ENCODE measurements at regions of chr11 and their contacts with region 1.

Region 1: GRCh38 chr11:62315431-62315830 is 16.6 kb upstream of the SCGB1D4 start:
- DNase-seq: no peak
- ATAC-seq: no peak
- H3K4me3 Mint-ChIP-seq: no peak overlapping the region
- H3K27ac Mint-ChIP-seq: no peak overlapping the region
- H3K4me1 Mint-ChIP-seq: peaks cover 10% of the 10 kb centered on the region
- H3K27me3 Mint-ChIP-seq: peaks cover 17% of the 10 kb centered on the region

Region 2: DNA sequence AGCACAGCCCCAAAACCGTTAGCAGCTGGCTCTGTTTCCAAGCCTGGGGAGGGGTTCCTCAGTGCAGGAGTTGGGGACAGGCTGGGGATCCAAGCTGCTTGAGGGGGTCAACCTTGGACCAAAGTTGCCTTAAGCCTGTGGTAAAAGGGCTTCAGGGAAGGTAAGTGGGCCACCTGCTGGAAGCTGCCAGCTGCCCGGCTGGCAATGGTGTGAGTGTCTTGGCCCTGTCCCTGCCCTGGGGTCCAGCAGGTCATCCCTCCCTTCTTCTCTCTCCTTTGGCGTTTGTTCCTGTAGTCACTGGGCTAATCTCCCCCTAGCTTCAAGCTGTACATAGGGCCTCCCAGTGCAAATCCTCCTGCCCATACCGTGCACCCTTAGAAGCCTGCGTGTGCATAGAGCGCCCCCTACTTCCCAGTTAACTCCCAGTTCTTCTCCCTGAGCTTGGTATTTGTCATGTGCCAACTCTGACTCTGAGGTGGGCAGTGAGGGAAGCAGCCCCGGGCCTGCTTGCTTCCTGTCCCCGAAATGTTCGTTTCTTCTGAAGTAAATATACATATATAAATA is 527.4 kb before region 1 on chr11:
- CTCF ChIA-PET with region 1: no interaction called
- POLR2A ChIA-PET with region 1: no interaction called
- intact Hi-C with region 1: no loop called
- DNase-seq: peak; percentile 39
- ATAC-seq: no peak
- H3K4me3 Mint-ChIP-seq: no peak overlapping the region
- H3K27ac Mint-ChIP-seq: no peak overlapping the region
- H3K4me1 Mint-ChIP-seq: peaks cover 16% of the 10 kb centered on the region
- H3K27me3 Mint-ChIP-seq: no peaks in the 10 kb centered on the region

Region 3: DNA sequence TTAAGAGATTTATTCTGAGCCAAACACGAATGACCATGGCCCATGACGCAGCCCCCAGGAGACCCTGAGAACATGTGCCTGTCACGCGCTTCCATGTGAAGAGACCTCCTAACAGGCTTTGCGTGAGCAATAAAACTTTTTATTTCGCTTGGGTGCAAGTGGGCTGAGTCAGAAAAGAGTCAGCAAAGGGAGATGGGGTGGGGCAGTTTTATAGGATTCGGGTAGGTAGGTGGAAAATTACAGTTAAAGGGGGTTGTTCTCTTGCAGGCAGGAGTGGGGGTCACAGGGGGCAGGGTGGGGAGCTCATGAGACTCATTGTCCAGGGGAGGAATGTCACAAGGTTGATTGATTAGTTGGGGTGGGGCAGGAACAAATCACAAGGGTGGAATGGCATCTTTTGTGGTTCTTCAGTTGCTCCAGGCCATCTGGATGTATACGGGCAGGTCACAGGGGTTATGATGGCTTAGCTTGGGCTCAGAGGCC is 270.8 kb before region 1 on chr11:
- CTCF ChIA-PET with region 1: no interaction called
- POLR2A ChIA-PET with region 1: no interaction called
- intact Hi-C with region 1: no loop called
- DNase-seq: no peak
- ATAC-seq: no peak
- H3K4me3 Mint-ChIP-seq: no peak overlapping the region
- H3K27ac Mint-ChIP-seq: no peak overlapping the region
- H3K4me1 Mint-ChIP-seq: peaks cover 2% of the 10 kb centered on the region
- H3K27me3 Mint-ChIP-seq: peaks cover 4% of the 10 kb centered on the region

Region 4: DNA sequence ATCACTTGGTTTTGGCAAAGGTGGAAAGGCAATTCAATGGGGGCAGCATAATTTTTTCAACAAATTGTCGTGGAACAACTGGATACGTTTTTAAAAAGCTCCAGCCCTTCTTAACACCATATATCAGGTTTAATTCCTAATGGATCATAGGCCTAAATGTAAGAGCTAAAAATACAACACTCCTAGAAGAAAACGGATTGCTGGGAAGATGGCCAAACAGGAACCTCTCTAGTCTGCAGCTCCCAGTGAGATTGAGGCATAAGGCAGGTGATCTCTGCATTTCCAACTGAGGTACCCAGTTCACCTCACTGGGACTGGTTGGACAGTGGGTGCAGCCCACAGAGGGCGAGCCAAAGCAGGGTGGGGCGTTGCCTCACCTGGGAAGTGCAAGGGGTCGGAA is 157.8 kb before region 1 on chr11:
- CTCF ChIA-PET with region 1: no interaction called
- POLR2A ChIA-PET with region 1: no interaction called
- intact Hi-C with region 1: no loop called
- DNase-seq: no peak
- ATAC-seq: no peak
- H3K4me3 Mint-ChIP-seq: no peak overlapping the region
- H3K27ac Mint-ChIP-seq: no peak overlapping the region
- H3K4me1 Mint-ChIP-seq: no peaks in the 10 kb centered on the region
- H3K27me3 Mint-ChIP-seq: peaks cover 19% of the 10 kb centered on the region

Region 5: DNA sequence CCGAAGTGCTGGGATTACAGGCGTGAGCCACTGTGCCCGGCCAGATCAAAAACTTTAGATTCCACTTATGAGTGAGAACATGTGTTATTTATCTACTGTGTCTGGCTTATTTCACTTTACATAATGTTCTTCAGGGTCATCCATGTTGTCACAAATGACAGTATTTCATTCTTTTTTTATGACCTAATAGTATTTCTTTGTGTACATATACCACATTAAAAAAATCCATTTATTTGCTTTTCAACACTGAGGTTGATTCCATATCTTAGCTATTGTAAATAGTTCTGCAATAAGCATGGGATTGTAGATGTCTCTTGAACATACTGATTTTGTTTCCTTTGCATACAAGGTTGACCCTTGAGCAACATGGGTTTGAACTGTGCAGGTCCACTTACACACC is 138.7 kb before region 1 on chr11:
- CTCF ChIA-PET with region 1: interaction called, 20 read pairs
- POLR2A ChIA-PET with region 1: no interaction called
- intact Hi-C with region 1: loop called (anchors 1 kb)
- DNase-seq: no peak
- ATAC-seq: no peak
- H3K4me3 Mint-ChIP-seq: no peak overlapping the region
- H3K27ac Mint-ChIP-seq: no peak overlapping the region
- H3K4me1 Mint-ChIP-seq: no peaks in the 10 kb centered on the region
- H3K27me3 Mint-ChIP-seq: peaks cover 20% of the 10 kb centered on the region

Region 6: GRCh38 chr11:62217191-62217748 is 98.2 kb before region 1 on chr11:
- CTCF ChIA-PET with region 1: interaction called, 8 read pairs
- POLR2A ChIA-PET with region 1: no interaction called
- intact Hi-C with region 1: loop called (anchors 1 kb)
- DNase-seq: peak; percentile 8
- ATAC-seq: no peak
- H3K4me3 Mint-ChIP-seq: no peak overlapping the region
- H3K27ac Mint-ChIP-seq: no peak overlapping the region
- H3K4me1 Mint-ChIP-seq: no peaks in the 10 kb centered on the region
- H3K27me3 Mint-ChIP-seq: peaks cover 11% of the 10 kb centered on the region

Region 7: GRCh38 chr11:62233730-62234129 is 81.7 kb before region 1 on chr11:
- CTCF ChIA-PET with region 1: interaction called, 6 read pairs
- POLR2A ChIA-PET with region 1: no interaction called
- intact Hi-C with region 1: loop called (anchors 1 kb)
- DNase-seq: no peak
- ATAC-seq: peak; percentile 23
- H3K4me3 Mint-ChIP-seq: no peak overlapping the region
- H3K27ac Mint-ChIP-seq: no peak overlapping the region
- H3K4me1 Mint-ChIP-seq: no peaks in the 10 kb centered on the region
- H3K27me3 Mint-ChIP-seq: peaks cover 29% of the 10 kb centered on the region

Region 8: DNA sequence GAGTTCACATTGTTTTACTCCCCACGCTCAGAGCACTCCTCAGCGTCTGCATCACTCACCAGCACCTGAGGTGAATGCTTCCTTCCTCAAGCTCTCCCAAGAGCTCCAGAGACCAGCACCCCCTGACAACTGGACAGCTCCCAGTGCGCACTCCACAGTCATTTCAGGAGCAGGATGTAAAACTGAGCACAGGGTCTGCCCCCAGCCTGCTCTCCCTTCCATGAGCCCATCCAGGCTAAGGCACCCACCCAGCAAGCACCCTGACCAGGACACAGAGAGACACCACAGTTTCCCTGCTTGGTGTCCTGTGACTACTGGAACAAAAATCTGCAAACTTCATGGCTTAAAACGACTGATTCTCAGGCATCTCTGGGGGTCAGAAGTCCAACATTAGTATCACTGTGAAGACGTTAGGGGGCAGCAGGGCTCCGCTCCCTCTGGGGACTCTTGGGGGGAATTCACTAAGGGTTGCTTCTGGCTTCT is 70.1 kb before region 1 on chr11:
- CTCF ChIA-PET with region 1: interaction called, 9 read pairs
- POLR2A ChIA-PET with region 1: no interaction called
- intact Hi-C with region 1: loop called in 1 of 2 experiments (anchors 1 kb)
- DNase-seq: peak; percentile 55
- ATAC-seq: peak; percentile 58
- H3K4me3 Mint-ChIP-seq: no peak overlapping the region
- H3K27ac Mint-ChIP-seq: no peak overlapping the region
- H3K4me1 Mint-ChIP-seq: no peaks in the 10 kb centered on the region
- H3K27me3 Mint-ChIP-seq: peaks cover 28% of the 10 kb centered on the region